CD4-positive, alpha-beta memory T cell (primary cell): ENCODE measurements at regions of chr22 and their contacts with region 1.

Region 1: GRCh38 chr22:38181453-38182247 is at the start of gene PLA2G6:
- DNase-seq: peak; percentile 92 to 95 (median 93)
- H3K4me3 ChIP-seq: peak within 1 kb of the TSS; percentile 66 to 94
- H3K4me3 Mint-ChIP-seq: peak within 1 kb of the TSS; percentile 85 to 98 (median 94)
- H3K27ac ChIP-seq: peak within 1 kb of the TSS; percentile 71
- H3K27ac Mint-ChIP-seq: peak within 1 kb of the TSS; percentile 87 to 99 (median 95)
- H3K4me1 ChIP-seq: peaks cover 31% of the 10 kb centered on the region
- H3K4me1 Mint-ChIP-seq: peaks cover 26 to 53% (median 39%) of the 10 kb centered on the region in 4 donors
- H3K27me3 ChIP-seq: no peaks in the 10 kb centered on the region
- H3K27me3 Mint-ChIP-seq: no peaks in the 10 kb centered on the region
- total RNA-seq, gene PLA2G6: 228 to 238 TPM

Region 2: DNA sequence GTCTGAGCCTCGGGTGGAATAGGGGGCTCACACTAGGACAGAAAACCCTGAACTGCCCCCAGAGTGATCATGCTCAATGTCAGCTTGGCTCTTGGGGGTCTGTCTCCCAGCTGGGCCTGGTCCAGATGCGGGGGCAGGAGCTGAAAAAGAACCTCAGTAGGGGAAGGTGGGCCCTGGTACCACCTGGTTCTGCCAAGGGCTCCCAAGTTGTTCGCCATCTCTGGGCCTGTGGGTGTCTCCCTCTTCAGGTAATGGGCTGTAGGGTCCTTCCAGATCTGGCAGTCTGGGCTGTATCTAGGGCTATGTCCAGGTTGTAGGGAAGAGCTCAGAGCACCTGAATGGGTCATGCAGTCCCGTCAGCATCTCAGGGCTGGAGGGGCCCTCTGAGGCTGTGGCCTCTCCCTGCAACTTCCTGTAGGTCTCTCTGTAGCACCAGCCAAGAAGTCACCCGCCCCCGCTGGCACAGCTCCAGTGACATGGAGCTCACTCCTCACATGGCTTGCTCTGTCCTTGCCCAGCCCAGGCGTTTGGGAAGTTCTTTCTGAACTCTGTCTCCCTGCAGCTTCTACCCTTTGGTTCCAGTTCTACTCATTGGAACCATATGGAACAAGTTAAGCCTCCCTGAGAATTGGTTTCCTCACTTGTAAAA is 164.3 kb before region 1 on chr22:
- CTCF ChIA-PET with region 1: no interaction called
- POLR2A ChIA-PET with region 1: no interaction called
- intact Hi-C with region 1: no loop called
- DNase-seq: no peak
- H3K4me3 ChIP-seq: no peak overlapping the region
- H3K4me3 Mint-ChIP-seq: no peak overlapping the region
- H3K27ac ChIP-seq: no peak overlapping the region
- H3K27ac Mint-ChIP-seq: no peak overlapping the region
- H3K4me1 ChIP-seq: no peaks in the 10 kb centered on the region
- H3K4me1 Mint-ChIP-seq: no peaks in the 10 kb centered on the region
- H3K27me3 ChIP-seq: no peaks in the 10 kb centered on the region
- H3K27me3 Mint-ChIP-seq: no peaks in the 10 kb centered on the region

Region 3: DNA sequence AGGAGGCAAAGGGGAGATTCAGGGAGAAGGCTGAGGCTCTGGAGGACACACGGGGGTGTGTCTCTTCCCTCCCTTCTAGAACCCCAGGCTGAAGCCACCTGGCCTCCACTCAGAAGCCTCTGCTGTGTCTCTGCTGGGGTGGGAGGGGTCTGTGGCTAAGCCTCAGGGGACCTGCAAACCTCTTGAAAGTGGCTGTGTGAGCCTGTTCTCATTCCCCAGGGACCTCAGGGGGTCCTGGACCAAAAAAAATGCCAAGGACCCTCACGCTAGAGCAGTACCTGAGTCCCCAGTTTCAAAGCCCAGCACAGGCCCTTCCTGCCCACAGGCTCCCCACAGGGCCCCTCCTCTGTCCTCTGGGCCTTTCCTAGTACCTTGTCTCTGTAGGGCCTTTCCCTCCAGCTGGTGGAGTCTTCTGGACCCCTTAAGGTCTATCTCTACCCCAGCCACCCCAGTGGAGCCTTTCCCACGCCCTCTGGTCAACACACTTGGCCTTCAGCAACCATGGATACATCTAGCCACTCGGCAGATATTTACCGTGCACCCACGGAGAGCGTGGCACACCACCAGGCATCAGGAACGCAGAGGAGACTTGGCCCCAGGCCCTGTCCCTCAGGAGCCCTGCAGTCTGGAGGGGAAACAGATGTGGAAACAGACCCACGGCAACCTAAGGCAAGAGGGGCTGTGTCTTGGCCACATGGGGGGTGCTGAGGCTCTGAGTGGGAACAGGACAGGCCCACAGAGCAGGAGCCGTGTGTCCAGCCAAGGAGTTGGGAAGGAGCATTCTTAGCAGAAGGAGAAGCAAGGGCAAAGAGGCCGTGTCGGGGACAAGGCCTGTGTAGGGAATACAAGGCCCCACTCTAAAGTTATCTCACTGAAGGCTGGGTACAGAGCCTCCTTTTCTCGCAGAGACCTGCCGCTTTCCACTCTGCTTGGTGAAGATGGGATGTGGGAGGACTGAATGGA is 18.5 kb before region 1 on chr22:
- CTCF ChIA-PET with region 1: no interaction called
- POLR2A ChIA-PET with region 1: no interaction called
- intact Hi-C with region 1: no loop called
- DNase-seq: no peak
- H3K4me3 ChIP-seq: no peak overlapping the region
- H3K4me3 Mint-ChIP-seq: no peak overlapping the region
- H3K27ac ChIP-seq: no peak overlapping the region
- H3K27ac Mint-ChIP-seq: peak overlapping the region in 1 of 7 donors; percentile 57
- H3K4me1 ChIP-seq: no peaks in the 10 kb centered on the region
- H3K4me1 Mint-ChIP-seq: peaks cover 5 to 6% (median 5%) of the 10 kb centered on the region in 4 donors
- H3K27me3 ChIP-seq: no peaks in the 10 kb centered on the region
- H3K27me3 Mint-ChIP-seq: no peaks in the 10 kb centered on the region

Region 4: DNA sequence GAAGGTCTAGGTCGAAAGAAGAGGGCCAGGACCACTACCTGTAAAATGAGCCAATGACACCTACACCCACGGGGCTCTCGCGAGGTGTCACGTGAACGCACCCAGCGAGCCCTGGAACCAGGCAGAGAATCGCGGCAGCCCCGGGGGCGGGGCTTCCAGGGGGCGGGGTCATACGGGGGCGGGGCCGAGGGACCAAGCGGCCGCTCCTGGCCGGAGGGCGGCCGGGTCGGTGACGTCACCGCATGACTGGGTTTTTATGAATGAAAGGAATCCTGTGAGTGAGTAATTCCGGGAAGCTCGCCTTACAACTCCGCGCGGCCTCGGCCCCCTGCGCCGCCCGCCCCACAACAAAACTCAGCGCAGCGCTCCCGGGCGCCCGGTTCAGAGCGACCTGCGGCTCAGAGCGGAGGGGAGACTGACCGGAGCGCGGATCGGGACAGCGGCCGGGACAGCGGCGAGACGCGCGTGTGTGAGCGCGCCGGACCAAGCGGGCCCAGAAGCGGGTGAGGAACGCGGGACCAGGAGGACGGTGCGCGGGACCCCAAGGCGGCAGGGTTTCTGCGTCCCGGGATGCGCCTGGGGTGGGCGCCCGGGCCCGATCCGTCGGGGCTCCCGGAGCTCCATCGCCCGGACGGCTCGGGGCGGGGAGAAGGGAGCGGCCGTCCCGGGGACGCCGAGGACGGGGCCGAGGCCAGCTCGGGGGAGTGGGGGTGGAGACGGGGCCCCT is 20.2 kb after region 1 on chr22 and contains the start of gene MAFF:
- CTCF ChIA-PET with region 1: no interaction called
- POLR2A ChIA-PET with region 1: interaction called, 38 read pairs
- intact Hi-C with region 1: loop called (anchors 1 kb)
- DNase-seq: peak; percentile 77 to 93 (median 80)
- H3K4me3 ChIP-seq: peak within 1 kb of the TSS; percentile 80 to 90
- H3K4me3 Mint-ChIP-seq: peak within 1 kb of the TSS; percentile 87 to 93 (median 90)
- H3K27ac ChIP-seq: peak within 1 kb of the TSS; percentile 81
- H3K27ac Mint-ChIP-seq: peak within 1 kb of the TSS; percentile 90 to 98 (median 97)
- H3K4me1 ChIP-seq: peaks cover 32% of the 10 kb centered on the region
- H3K4me1 Mint-ChIP-seq: peaks cover 18 to 47% (median 26%) of the 10 kb centered on the region in 4 donors
- H3K27me3 ChIP-seq: no peaks in the 10 kb centered on the region
- H3K27me3 Mint-ChIP-seq: no peaks in the 10 kb centered on the region
- total RNA-seq, gene MAFF: 6.8 TPM

Region 5: DNA sequence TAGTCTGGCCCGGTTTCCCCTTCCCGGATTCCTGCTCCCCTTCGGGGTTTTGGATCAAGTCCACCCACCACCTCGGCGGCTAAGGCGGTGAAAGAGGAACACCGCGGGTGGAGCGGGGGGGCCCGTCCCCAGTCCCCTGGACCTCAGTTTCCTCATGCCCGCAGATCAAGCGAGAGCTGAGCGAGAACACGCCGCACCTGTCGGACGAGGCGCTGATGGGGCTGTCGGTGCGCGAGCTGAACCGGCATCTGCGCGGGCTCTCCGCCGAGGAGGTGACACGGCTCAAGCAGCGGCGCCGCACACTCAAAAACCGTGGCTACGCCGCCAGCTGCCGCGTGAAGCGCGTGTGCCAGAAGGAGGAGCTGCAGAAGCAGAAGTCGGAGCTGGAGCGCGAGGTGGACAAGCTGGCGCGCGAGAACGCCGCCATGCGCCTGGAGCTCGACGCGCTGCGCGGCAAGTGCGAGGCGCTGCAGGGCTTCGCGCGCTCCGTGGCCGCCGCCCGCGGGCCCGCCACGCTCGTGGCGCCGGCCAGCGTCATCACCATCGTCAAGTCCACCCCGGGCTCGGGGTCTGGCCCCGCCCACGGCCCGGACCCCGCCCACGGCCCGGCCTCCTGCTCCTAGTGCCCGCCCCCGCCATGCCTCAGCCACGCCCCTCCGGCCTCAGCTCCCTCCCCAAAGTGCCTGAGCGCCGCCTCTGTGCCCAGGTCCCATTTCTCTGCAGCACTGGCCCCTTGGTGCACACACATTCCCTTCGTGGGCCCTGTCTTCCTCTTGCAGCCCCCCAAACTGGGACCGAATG is 32.8 kb after region 1 on chr22:
- CTCF ChIA-PET with region 1: interaction called, 3 read pairs
- POLR2A ChIA-PET with region 1: interaction called, 13 read pairs
- intact Hi-C with region 1: loop called (anchors 1 kb)
- DNase-seq: peak; percentile 80 to 85 (median 82)
- H3K4me3 ChIP-seq: peak overlapping the region in 1 of 2 donors; percentile 19
- H3K4me3 Mint-ChIP-seq: peak overlapping the region; percentile 24 to 78 (median 66)
- H3K27ac ChIP-seq: peak overlapping the region; percentile 43
- H3K27ac Mint-ChIP-seq: peak overlapping the region; percentile 42 to 91 (median 75)
- H3K4me1 ChIP-seq: peaks cover 29% of the 10 kb centered on the region
- H3K4me1 Mint-ChIP-seq: peaks cover 15 to 49% (median 34%) of the 10 kb centered on the region in 4 donors
- H3K27me3 ChIP-seq: no peaks in the 10 kb centered on the region
- H3K27me3 Mint-ChIP-seq: no peaks in the 10 kb centered on the region